MCF 10A (cell line): ENCODE measurements at regions of chr6 and their contacts with region 1.

Region 1: DNA sequence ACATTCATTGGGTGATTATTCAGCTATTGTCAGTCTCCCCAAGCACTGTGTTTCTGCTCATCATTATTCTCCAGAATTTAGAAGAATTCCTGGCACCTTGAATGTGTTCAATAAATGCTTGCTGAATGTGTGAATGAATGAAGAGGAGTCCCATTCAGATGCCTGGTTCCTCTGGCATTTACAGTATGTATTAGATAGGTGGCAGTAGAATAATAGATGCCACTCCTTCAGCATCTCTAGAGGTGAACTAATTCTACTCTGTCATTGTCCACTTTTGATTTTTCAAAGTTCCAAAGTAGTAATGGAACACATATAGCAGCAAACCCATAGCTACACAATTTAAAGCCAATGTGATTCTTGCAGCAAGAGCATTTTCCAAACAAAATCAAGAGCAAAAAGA is 118.9 kb upstream of the CEP162 start:
- DNase-seq: peak; percentile 13
- H3K4me3 Mint-ChIP-seq: no peak overlapping the region
- H3K27ac Mint-ChIP-seq: no peak overlapping the region
- H3K4me1 Mint-ChIP-seq: peaks cover 5% of the 10 kb centered on the region
- H3K27me3 Mint-ChIP-seq: no peaks in the 10 kb centered on the region
- CTCF ChIP-seq: peak; percentile 23

Region 2: GRCh38 chr6:84356907-84357306 is 10.5 kb after region 1 on chr6:
- CTCF ChIA-PET with region 1: interaction called, 11 read pairs
- POLR2A ChIA-PET with region 1: no interaction called
- intact Hi-C with region 1: no loop called
- DNase-seq: no peak
- H3K4me3 Mint-ChIP-seq: no peak overlapping the region
- H3K27ac Mint-ChIP-seq: no peak overlapping the region
- H3K4me1 Mint-ChIP-seq: no peaks in the 10 kb centered on the region
- H3K27me3 Mint-ChIP-seq: no peaks in the 10 kb centered on the region
- CTCF ChIP-seq: no peak